Esophagus muscularis mucosa (tissue), 4 donors: ENCODE measurements at regions of chr4 and their contacts with region 1.

Region 1: GRCh38 chr4:89904524-89904923 is 9.9 kb downstream of the MMRN1 start:
- DNase-seq: no peak
- H3K4me3 ChIP-seq: no peak overlapping the region
- H3K27ac ChIP-seq: no peak overlapping the region
- H3K4me1 ChIP-seq: no peaks in the 10 kb centered on the region
- H3K27me3 ChIP-seq: no peaks in the 10 kb centered on the region
- CTCF ChIP-seq: no peak
- EP300 ChIP-seq: no peak
- POLR2A ChIP-seq: no peak

Region 2: GRCh38 chr4:89226665-89227574 is 677.6 kb before region 1 on chr4:
- intact Hi-C with region 1: loop called (anchors 5 kb)
- DNase-seq: no peak
- H3K4me3 ChIP-seq: no peak overlapping the region
- H3K27ac ChIP-seq: no peak overlapping the region
- H3K4me1 ChIP-seq: peaks cover 0 to 5% (median 0%) of the 10 kb centered on the region in 4 donors
- H3K27me3 ChIP-seq: no peaks in the 10 kb centered on the region
- CTCF ChIP-seq: peak; percentile 74 to 80 (median 78)
- EP300 ChIP-seq: no peak
- POLR2A ChIP-seq: no peak

Region 3: GRCh38 chr4:89657931-89658700 is 246.4 kb before region 1 on chr4:
- intact Hi-C with region 1: loop called (anchors 2 kb)
- DNase-seq: no peak
- H3K4me3 ChIP-seq: no peak overlapping the region
- H3K27ac ChIP-seq: no peak overlapping the region
- H3K4me1 ChIP-seq: no peaks in the 10 kb centered on the region
- H3K27me3 ChIP-seq: no peaks in the 10 kb centered on the region
- CTCF ChIP-seq: peak in 2 of 3 experiments; percentile 36 to 38
- EP300 ChIP-seq: no peak
- POLR2A ChIP-seq: no peak

Region 4: GRCh38 chr4:90274175-90274574 is 369.7 kb after region 1 on chr4:
- intact Hi-C with region 1: no loop called
- DNase-seq: no peak
- H3K4me3 ChIP-seq: no peak overlapping the region
- H3K27ac ChIP-seq: no peak overlapping the region
- H3K4me1 ChIP-seq: no peaks in the 10 kb centered on the region
- H3K27me3 ChIP-seq: no peaks in the 10 kb centered on the region
- CTCF ChIP-seq: no peak
- EP300 ChIP-seq: no peak
- POLR2A ChIP-seq: no peak